Activated naive CD4-positive, alpha-beta T cell treated with anti-CD3 and anti-CD28 coated beads for 36 hours (primary cell): ENCODE measurements at regions of chr6 and their contacts with region 1.

Region 1: GRCh38 chr6:169959136-169960002 is 207.9 kb downstream of the ERMARD start:
- DNase-seq: peak; percentile 79
- H3K4me3 Mint-ChIP-seq: peak overlapping the region; percentile 21
- H3K27ac Mint-ChIP-seq: peak overlapping the region; percentile 68
- H3K4me1 Mint-ChIP-seq: peaks cover 20% of the 10 kb centered on the region
- H3K27me3 Mint-ChIP-seq: peaks cover 5% of the 10 kb centered on the region

Region 2: GRCh38 chr6:170147832-170148708 is 188.7 kb after region 1 on chr6:
- CTCF ChIA-PET with region 1: no interaction called
- intact Hi-C with region 1: loop called (anchors 10 kb)
- DNase-seq: peak; percentile 65
- H3K4me3 Mint-ChIP-seq: peak overlapping the region; percentile 52
- H3K27ac Mint-ChIP-seq: peak overlapping the region; percentile 66
- H3K4me1 Mint-ChIP-seq: peaks cover 39% of the 10 kb centered on the region
- H3K27me3 Mint-ChIP-seq: peaks cover 3% of the 10 kb centered on the region

Region 3: GRCh38 chr6:170371588-170371987 is 412.2 kb after region 1 on chr6:
- CTCF ChIA-PET with region 1: no interaction called
- intact Hi-C with region 1: loop called (anchors 10 kb)
- DNase-seq: no peak
- H3K4me3 Mint-ChIP-seq: no peak overlapping the region
- H3K27ac Mint-ChIP-seq: peak overlapping the region; percentile 67
- H3K4me1 Mint-ChIP-seq: peaks cover 14% of the 10 kb centered on the region
- H3K27me3 Mint-ChIP-seq: no peaks in the 10 kb centered on the region